ENCODE measurements at regions of chr11 and their contacts with region 1.

Region 1: GRCh38 chr11:32615422-32615821 is 31.8 kb downstream of the EIF3M start:
- DNase-seq: no peak
- H3K4me3 Mint-ChIP-seq: no peak overlapping the region
- H3K27ac Mint-ChIP-seq: no peak overlapping the region
- H3K4me1 Mint-ChIP-seq: no peaks in the 10 kb centered on the region
- H3K27me3 Mint-ChIP-seq: no peaks in the 10 kb centered on the region
- CTCF ChIP-seq: no peak

Region 2: GRCh38 chr11:32326522-32326921 is 288.9 kb before region 1 on chr11:
- CTCF ChIA-PET with region 1: interaction called, 5 read pairs
- intact Hi-C with region 1: loop called (anchors 1 kb)
- DNase-seq: no peak
- H3K4me3 Mint-ChIP-seq: no peak overlapping the region
- H3K27ac Mint-ChIP-seq: no peak overlapping the region
- H3K4me1 Mint-ChIP-seq: no peaks in the 10 kb centered on the region
- H3K27me3 Mint-ChIP-seq: peaks cover 18% of the 10 kb centered on the region
- CTCF ChIP-seq: no peak

Region 3: GRCh38 chr11:32385998-32386397 is 229.4 kb before region 1 on chr11:
- CTCF ChIA-PET with region 1: interaction called, 4 read pairs
- intact Hi-C with region 1: loop called (anchors 2 kb)
- DNase-seq: peak; percentile 41
- H3K4me3 Mint-ChIP-seq: no peak overlapping the region
- H3K27ac Mint-ChIP-seq: no peak overlapping the region
- H3K4me1 Mint-ChIP-seq: no peaks in the 10 kb centered on the region
- H3K27me3 Mint-ChIP-seq: peaks cover 100% of the 10 kb centered on the region
- CTCF ChIP-seq: peak; percentile 32

Region 4: GRCh38 chr11:32420937-32421901 is 194.2 kb before region 1 on chr11:
- CTCF ChIA-PET with region 1: no interaction called
- intact Hi-C with region 1: no loop called
- DNase-seq: no peak
- H3K4me3 Mint-ChIP-seq: no peak overlapping the region
- H3K27ac Mint-ChIP-seq: no peak overlapping the region
- H3K4me1 Mint-ChIP-seq: no peaks in the 10 kb centered on the region
- H3K27me3 Mint-ChIP-seq: peaks cover 86% of the 10 kb centered on the region
- CTCF ChIP-seq: no peak

Region 5: GRCh38 chr11:32643526-32643925 is 28.1 kb after region 1 on chr11:
- CTCF ChIA-PET with region 1: no interaction called
- intact Hi-C with region 1: no loop called
- DNase-seq: no peak
- H3K4me3 Mint-ChIP-seq: no peak overlapping the region
- H3K27ac Mint-ChIP-seq: no peak overlapping the region
- H3K4me1 Mint-ChIP-seq: no peaks in the 10 kb centered on the region
- H3K27me3 Mint-ChIP-seq: no peaks in the 10 kb centered on the region
- CTCF ChIP-seq: no peak